PC-9 (cell line): ENCODE measurements at regions of chr12 and their contacts with region 1.

Region 1: DNA sequence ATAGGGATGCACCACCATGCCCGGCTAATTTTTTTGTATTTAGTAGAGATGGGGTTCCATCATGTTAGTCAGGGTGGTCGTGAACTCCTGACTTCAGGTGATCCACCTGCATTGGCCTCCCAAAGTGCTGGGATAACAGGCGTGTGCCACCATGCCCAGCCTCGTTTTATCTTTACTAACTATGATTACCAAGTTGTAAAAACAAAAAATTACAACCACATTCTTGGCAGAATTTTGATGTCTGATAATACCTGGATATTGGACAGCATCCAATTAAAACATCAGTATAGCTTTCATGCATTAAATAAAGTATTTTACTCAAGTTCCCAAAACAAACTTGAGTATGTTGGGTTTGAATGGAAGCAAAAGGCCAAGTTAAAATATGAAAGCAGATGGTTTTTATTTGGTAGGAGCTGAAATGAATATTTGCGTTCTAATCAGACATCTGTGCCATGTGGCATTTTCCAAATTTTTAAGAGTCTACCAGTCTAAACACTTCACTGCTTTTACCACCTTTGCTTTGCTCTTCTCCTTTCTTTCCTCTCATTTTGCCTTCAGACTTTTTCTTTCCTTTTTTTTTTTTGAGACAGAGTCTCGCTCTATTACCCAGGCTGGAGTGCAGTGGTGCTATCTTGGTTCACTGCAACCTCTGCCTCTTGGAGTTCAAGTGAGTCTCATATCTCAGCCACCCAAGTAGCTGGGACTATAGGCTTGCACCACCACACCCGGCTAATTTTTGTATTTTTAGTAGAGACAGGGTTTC is 32.1 kb downstream of the DDX47 start:
- DNase-seq: peak in 1 of 2 experiments; percentile 41
- H3K4me3 ChIP-seq: no peak overlapping the region
- H3K27ac ChIP-seq: peak overlapping the region; percentile 28; the same call in 1 of the 2 replicates
- H3K4me1 ChIP-seq: peaks cover 35% of the 10 kb centered on the region
- H3K27me3 ChIP-seq: no peaks in the 10 kb centered on the region
- CTCF ChIP-seq: no peak

Region 2: GRCh38 chr12:12138203-12139154 is 706.7 kb before region 1 on chr12:
- CTCF ChIA-PET with region 1: no interaction called
- POLR2A ChIA-PET with region 1: interaction called, 30 read pairs
- intact Hi-C with region 1: no loop called
- DNase-seq: no peak
- H3K4me3 ChIP-seq: no peak overlapping the region
- H3K27ac ChIP-seq: no peak overlapping the region
- H3K4me1 ChIP-seq: no peaks in the 10 kb centered on the region
- H3K27me3 ChIP-seq: no peaks in the 10 kb centered on the region
- CTCF ChIP-seq: no peak

Region 3: GRCh38 chr12:12859690-12860089 is 14.5 kb after region 1 on chr12:
- CTCF ChIA-PET with region 1: interaction called, 12 read pairs
- POLR2A ChIA-PET with region 1: no interaction called
- intact Hi-C with region 1: no loop called
- DNase-seq: no peak
- H3K4me3 ChIP-seq: no peak overlapping the region
- H3K27ac ChIP-seq: no peak overlapping the region
- H3K4me1 ChIP-seq: peaks cover 8% of the 10 kb centered on the region
- H3K27me3 ChIP-seq: no peaks in the 10 kb centered on the region
- CTCF ChIP-seq: no peak